Activated B cell treated with CpG ODN at 0.5 μM for 24 hours (primary cell): ENCODE measurements at regions of chr1 and their contacts with region 1.

Region 1: GRCh38 chr1:6235296-6235677 is 477 bp downstream of the ICMT start:
- DNase-seq: no peak
- ATAC-seq: no peak
- H3K4me3 Mint-ChIP-seq: peak overlapping the region; percentile 90
- H3K27ac Mint-ChIP-seq: no peak overlapping the region
- H3K4me1 Mint-ChIP-seq: peaks cover 8% of the 10 kb centered on the region
- H3K27me3 Mint-ChIP-seq: peaks cover 14% of the 10 kb centered on the region
- CTCF ChIP-seq: no peak

Region 2: DNA sequence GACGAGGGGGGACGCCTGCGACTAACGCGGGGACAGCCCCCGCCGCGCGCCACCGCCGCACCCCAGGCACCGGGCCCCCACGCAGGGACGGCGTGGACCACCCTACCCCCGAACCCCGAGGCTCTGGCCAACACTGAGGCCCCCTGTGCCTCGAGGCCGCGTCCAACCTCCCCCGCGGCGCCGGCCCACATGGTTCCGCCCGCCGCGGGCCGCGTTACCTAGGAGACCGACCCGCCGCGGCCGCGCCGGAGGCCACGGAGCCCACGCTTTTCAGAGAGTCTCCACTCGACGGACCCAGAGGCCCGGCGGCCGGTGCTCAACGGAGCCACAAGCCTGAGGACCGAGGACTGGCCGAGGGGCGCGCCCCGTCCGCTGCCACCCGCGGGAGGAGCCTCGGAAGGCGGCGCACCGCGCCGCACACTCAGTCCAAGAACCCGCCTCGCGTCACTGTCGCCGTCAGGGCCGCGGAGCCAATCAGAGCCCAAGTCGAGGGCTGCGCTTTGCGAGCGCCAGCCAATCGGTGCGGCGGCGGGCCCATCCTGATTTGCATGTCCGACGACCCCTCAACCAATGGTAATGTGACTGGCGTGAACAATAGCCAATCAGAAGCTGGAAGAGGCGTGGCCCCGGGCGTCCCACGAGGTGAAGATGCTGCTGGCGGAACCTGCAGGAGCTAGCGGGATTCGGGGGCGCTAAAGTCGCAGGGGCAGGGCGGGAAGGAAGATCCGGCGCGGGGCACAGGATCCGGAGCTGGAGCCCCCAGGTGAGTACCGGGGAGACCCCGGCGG is 243.1 kb before region 1 on chr1 and contains the start of gene NPHP4:
- CTCF ChIA-PET with region 1: no interaction called
- POLR2A ChIA-PET with region 1: no interaction called
- intact Hi-C with region 1: loop called (anchors 2 kb)
- DNase-seq: peak; percentile 93
- ATAC-seq: peak; percentile 90
- H3K4me3 Mint-ChIP-seq: peak within 1 kb of the TSS; percentile 94
- H3K27ac Mint-ChIP-seq: peak within 1 kb of the TSS; percentile 84
- H3K4me1 Mint-ChIP-seq: peaks cover 34% of the 10 kb centered on the region
- H3K27me3 Mint-ChIP-seq: no peaks in the 10 kb centered on the region
- CTCF ChIP-seq: no peak
- total RNA-seq, gene NPHP4: 6.2 and 8.0 TPM in 2 replicates

Region 3: GRCh38 chr1:6127587-6128163 is 107.6 kb before region 1 on chr1:
- CTCF ChIA-PET with region 1: no interaction called
- POLR2A ChIA-PET with region 1: no interaction called
- intact Hi-C with region 1: no loop called
- DNase-seq: peak; percentile 35
- ATAC-seq: peak; percentile 92
- H3K4me3 Mint-ChIP-seq: no peak overlapping the region
- H3K27ac Mint-ChIP-seq: no peak overlapping the region
- H3K4me1 Mint-ChIP-seq: peaks cover 4% of the 10 kb centered on the region
- H3K27me3 Mint-ChIP-seq: peaks cover 2% of the 10 kb centered on the region
- CTCF ChIP-seq: no peak